ENCODE measurements at regions of chr5 and their contacts with region 1.

Region 1: DNA sequence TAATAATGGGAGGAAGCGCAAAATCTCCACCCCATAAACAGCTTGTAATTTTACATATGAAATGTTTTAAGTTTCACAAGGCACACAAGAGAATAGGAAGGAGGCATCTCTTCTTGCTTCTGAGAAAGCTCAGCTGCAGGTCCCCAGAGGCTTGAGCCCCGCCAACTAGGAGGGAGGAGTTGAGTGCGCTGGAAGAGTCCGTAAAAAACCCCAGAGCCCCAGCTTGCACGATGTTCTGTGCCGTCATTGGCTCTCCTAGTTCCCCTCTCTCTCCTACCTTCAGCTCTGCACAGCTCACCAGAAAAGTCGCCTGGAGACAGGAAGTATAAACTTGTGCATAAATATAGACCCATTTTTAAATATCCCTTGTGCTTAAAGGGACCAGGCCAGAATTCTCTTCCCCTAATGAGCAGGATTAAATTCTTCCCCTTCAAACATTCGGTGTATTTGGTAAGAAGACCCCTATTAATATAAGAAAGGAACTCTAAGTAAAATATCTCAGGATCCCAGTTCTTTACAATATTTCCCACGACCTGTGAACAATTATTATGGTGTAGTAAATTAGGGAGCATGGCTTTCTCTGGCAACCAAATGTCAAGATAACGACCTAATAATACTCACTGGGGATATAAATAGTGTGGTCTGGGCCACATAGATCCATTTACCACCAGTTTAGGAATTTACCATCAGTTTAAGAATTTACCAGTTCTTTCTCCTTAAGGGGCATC is 13.7 kb downstream of the GLRX start:
- DNase-seq: peak; percentile 76 to 88
- ATAC-seq: peak; percentile 94 to 97 (median 95)
- H3K4me3 ChIP-seq: peak overlapping the region in 5 of 10 donors; percentile 7 to 31 (median 18)
- H3K27ac ChIP-seq: peak overlapping the region; percentile 44 to 89 (median 83)
- H3K4me1 ChIP-seq: peaks cover 11 to 73% (median 53%) of the 10 kb centered on the region in 9 donors
- H3K27me3 ChIP-seq: no peaks in the 10 kb centered on the region
- CTCF ChIP-seq: no peak

Region 2: DNA sequence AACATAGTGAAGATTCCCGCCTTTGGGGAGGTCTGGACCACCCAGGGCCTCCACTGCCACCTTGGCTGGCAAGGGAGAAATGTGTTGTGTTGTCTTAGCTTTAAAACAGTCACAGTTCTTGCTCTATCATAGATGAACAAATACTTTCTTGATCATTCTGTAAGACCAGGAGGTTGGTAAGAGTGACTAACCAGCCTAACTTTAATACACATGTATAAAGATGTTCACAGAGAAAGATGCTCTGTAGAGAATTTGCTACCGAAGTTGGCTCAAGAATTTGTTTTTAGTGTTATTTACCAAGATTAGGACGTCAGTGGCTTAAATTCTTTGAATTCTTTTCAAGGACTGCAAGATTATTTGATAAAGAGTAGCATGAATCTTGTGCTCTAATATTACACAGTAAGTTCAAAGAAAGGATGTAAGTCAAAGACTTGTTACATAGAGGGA is 14.8 kb before region 1 on chr5:
- intact Hi-C with region 1: loop called in 1 of 10 experiments (anchors 2 kb)
- DNase-seq: no peak
- ATAC-seq: no peak
- H3K4me3 ChIP-seq: no peak overlapping the region
- H3K27ac ChIP-seq: no peak overlapping the region
- H3K4me1 ChIP-seq: peaks cover 0 to 12% (median 0%) of the 10 kb centered on the region in 9 donors
- H3K27me3 ChIP-seq: no peaks in the 10 kb centered on the region
- CTCF ChIP-seq: no peak

Region 3: DNA sequence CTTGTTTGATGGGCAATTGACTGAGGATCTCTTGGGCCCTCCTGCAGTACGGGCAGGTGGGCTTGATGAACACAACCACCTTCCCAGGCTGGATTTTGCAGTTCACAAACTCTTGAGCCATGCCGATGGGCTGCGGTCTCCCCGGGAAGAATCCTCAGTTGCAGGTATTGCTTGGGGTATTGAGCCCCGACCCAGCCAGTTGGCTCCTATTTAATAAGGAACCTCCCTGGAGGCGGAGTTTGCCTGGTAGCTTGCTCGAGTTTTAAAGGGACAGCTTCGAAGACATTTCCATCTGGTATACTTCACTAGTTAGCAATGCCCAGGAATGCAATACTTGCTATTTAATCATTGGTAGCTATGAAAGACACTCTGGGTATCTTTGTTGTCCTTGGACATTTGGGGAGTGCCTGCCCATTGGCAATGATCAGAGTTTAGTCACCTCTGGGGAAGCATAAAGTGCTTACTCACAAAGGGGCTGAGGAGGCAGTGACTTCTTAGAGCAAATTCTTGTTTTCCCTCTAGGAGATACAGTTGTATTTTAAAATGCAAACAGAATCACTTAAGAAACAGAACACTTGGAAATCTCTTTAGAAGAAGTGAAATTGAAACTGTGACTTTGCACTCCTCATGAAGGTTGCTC is 13.8 kb after region 1 on chr5 and contains the start of gene GLRX:
- intact Hi-C with region 1: loop called in 1 of 10 experiments (anchors 2 kb)
- DNase-seq: peak; percentile 50 to 75
- ATAC-seq: peak; percentile 64 to 84 (median 74)
- H3K4me3 ChIP-seq: peak within 1 kb of the TSS; percentile 48 to 90 (median 75)
- H3K27ac ChIP-seq: peak within 1 kb of the TSS; percentile 59 to 98 (median 90)
- H3K4me1 ChIP-seq: peaks cover 16 to 77% (median 62%) of the 10 kb centered on the region in 9 donors
- H3K27me3 ChIP-seq: no peaks in the 10 kb centered on the region
- CTCF ChIP-seq: no peak
- total RNA-seq, gene GLRX: 68.7 to 156 (median 111) TPM